A549 (cell line): ENCODE measurements at regions of chr5 and their contacts with region 1.

Region 1: GRCh38 chr5:36414869-36415282 is 113.2 kb upstream of the RANBP3L start:
- DNase-seq: peak in 1 of 2 experiments; percentile 55
- ATAC-seq: peak in 1 of 2 experiments; percentile 50; a peak in 3 of 6 replicates
- H3K4me3 ChIP-seq: no peak overlapping the region
- H3K27ac ChIP-seq: no peak overlapping the region
- H3K4me1 ChIP-seq: no peaks in the 10 kb centered on the region
- CTCF ChIP-seq: peak; percentile 57
- EP300 ChIP-seq: no peak
- POLR2A ChIP-seq: no peak
- RAD21 ChIP-seq: peak; percentile 60 to 67

Region 2: GRCh38 chr5:36507332-36507952 is 92.6 kb after region 1 on chr5:
- CTCF ChIA-PET with region 1: interaction called, 33 read pairs
- POLR2A ChIA-PET with region 1: no interaction called
- DNase-seq: peak; percentile 62 to 69
- ATAC-seq: peak; percentile 59 to 80; a peak in 3 of 6 replicates
- H3K4me3 ChIP-seq: no peak overlapping the region
- H3K27ac ChIP-seq: no peak overlapping the region
- H3K4me1 ChIP-seq: no peaks in the 10 kb centered on the region
- CTCF ChIP-seq: peak; percentile 84
- EP300 ChIP-seq: no peak
- POLR2A ChIP-seq: no peak
- RAD21 ChIP-seq: peak; percentile 64